ENCODE measurements at regions of chr9 and their contacts with region 1.

Region 1: GRCh38 chr9:68714416-68715180 is 9.6 kb downstream of the PIP5K1B start:
- DNase-seq: no peak
- ATAC-seq: no peak
- H3K4me3 ChIP-seq: no peak overlapping the region
- H3K27ac ChIP-seq: no peak overlapping the region
- H3K4me1 ChIP-seq: peaks cover 0 to 44% (median 6%) of the 10 kb centered on the region in 12 donors
- H3K27me3 ChIP-seq: no peaks in the 10 kb centered on the region
- CTCF ChIP-seq: no peak
- POLR2A ChIP-seq: no peak

Region 2: DNA sequence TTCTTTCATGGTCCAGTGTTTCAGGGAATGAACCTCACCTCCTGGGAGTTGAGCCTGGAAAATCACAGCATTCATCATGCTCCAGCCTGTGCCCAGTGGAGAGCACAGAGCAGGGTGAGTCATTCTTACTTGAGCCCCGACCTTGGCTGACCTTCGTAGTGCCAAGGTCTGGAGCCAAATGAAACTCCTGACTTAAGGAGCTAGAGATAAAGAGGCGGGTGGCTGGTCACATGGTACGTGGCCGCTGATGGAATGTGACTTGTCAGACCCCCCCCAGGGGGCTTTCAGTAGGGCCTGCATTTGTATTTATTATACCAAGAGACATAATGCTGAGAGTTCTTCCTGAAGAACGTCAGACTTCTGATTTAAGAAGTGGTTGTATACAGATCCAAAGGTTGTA is 24.5 kb before region 1 on chr9:
- intact Hi-C with region 1: no loop called
- DNase-seq: peak in 4 of 5 donors; percentile 51 to 76 (median 63)
- ATAC-seq: peak; percentile 90 to 96 (median 96)
- H3K4me3 ChIP-seq: no peak overlapping the region
- H3K27ac ChIP-seq: peak overlapping the region in 9 of 12 donors; percentile 38 to 66 (median 57)
- H3K4me1 ChIP-seq: peaks cover 0 to 23% (median 6%) of the 10 kb centered on the region in 12 donors
- H3K27me3 ChIP-seq: peaks cover 0 to 5% (median 0%) of the 10 kb centered on the region in 9 donors
- CTCF ChIP-seq: no peak
- POLR2A ChIP-seq: no peak

Region 3: DNA sequence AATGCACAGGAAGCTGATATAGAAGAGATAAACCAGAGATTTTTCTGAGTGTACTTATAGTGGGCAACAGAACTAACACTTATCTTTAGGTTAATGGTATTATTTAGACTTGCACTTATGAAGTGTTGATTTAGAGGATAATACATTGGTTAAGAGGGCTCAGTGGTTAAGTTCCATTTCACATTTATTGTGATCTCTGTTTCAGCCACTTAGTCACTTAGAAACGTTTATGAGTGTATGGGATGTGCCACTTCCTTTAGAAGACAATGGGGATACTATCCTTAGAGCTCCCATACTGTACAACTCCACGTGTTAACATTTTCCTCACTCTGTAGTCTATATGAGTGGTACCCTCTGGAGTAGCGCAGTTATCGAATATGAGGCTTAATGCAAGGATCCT is 48.0 kb after region 1 on chr9:
- intact Hi-C with region 1: loop called in 1 of 10 experiments (anchors 10 kb)
- DNase-seq: no peak
- ATAC-seq: peak in 1 of 4 donors; percentile 18
- H3K4me3 ChIP-seq: no peak overlapping the region
- H3K27ac ChIP-seq: no peak overlapping the region
- H3K4me1 ChIP-seq: peaks cover 0 to 44% (median 7%) of the 10 kb centered on the region in 12 donors
- H3K27me3 ChIP-seq: no peaks in the 10 kb centered on the region
- CTCF ChIP-seq: no peak
- POLR2A ChIP-seq: no peak